MCF 10A (cell line): ENCODE measurements at regions of chr1 and their contacts with region 1.

Region 1: DNA sequence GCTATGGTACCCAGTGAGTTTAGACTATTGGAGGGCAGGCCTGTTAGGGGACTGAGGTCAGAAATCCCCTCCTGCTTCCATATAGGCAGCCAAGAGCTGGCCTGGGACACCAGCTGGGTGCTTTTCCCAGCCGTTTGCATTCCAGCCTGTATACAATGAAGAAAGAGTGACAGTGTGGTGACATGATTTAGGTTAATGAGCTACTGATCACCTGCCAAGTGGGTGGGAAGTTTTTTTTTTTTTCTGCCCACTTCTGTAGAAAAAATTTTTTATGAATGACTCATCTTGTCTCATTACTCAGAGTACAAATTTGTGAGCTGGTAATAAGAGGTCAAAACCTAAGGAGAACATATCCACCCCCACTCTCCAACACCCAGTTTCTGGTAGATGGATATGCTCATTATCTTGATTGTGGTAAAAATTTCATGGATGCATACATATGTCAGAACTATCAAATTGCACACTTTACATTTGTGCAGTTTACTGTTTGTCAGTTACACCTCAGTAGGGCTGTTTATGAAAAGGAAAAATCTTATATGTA is 16.4 kb upstream of the CGN start:
- DNase-seq: peak; percentile 82
- H3K4me3 Mint-ChIP-seq: no peak overlapping the region
- H3K27ac Mint-ChIP-seq: no peak overlapping the region
- H3K4me1 Mint-ChIP-seq: peaks cover 14% of the 10 kb centered on the region
- H3K27me3 Mint-ChIP-seq: peaks cover 34% of the 10 kb centered on the region
- CTCF ChIP-seq: no peak

Region 2: GRCh38 chr1:151510957-151511635 is 16.3 kb after region 1 on chr1 and contains the start of gene CGN:
- CTCF ChIA-PET with region 1: no interaction called
- POLR2A ChIA-PET with region 1: interaction called, 10 read pairs
- intact Hi-C with region 1: no loop called
- DNase-seq: peak; percentile 85
- H3K4me3 Mint-ChIP-seq: peak within 1 kb of the TSS; percentile 75
- H3K27ac Mint-ChIP-seq: no peak within 1 kb of the TSS
- H3K4me1 Mint-ChIP-seq: peaks cover 28% of the 10 kb centered on the region
- H3K27me3 Mint-ChIP-seq: peaks cover 17% of the 10 kb centered on the region
- CTCF ChIP-seq: no peak
- total RNA-seq, gene CGN: 0.32 and 0.33 TPM in 2 replicates

Region 3: DNA sequence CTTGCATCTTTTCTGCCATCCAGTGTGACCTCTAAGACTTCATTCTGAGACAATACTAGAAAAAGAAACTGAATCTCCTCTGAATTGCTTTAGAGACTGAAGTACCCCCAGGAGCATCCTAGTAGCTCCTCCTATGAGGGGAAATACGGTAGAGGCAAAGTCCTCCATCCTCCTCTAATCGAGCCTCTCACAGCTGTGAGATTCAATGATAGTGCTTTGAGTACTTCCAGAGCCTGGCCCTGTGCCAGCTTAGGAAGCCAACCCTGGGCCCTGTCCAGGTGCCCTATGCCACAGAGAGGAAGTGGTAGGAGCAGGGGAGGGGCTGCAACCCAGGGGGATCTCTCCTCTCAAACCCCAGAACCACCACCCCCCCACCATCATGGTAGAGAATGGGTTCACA is 326.1 kb after region 1 on chr1:
- CTCF ChIA-PET with region 1: no interaction called
- POLR2A ChIA-PET with region 1: no interaction called
- intact Hi-C with region 1: no loop called
- DNase-seq: peak; percentile 71
- H3K4me3 Mint-ChIP-seq: no peak overlapping the region
- H3K27ac Mint-ChIP-seq: no peak overlapping the region
- H3K4me1 Mint-ChIP-seq: peaks cover 16% of the 10 kb centered on the region
- H3K27me3 Mint-ChIP-seq: no peaks in the 10 kb centered on the region
- CTCF ChIP-seq: no peak